K562 (cell line): ENCODE measurements at regions of chr1 and their contacts with region 1.

Region 1: GRCh38 chr1:228131766-228132165 is 8.3 kb upstream of the GUK1 start:
- DNase-seq: no peak
- ATAC-seq: no peak
- H3K4me3 ChIP-seq: no peak overlapping the region
- H3K27ac ChIP-seq: no peak overlapping the region
- H3K4me1 ChIP-seq: peaks cover 3 to 6% of the 10 kb centered on the region in 2 experiments; a peak in 3 of 5 replicates
- H3K27me3 ChIP-seq: no peaks in the 10 kb centered on the region
- CTCF ChIP-seq: no peak
- EP300 ChIP-seq: no peak
- POLR2A ChIP-seq: no peak
- RAD21 ChIP-seq: no peak

Region 2: GRCh38 chr1:227886993-227887696 is 244.6 kb before region 1 on chr1:
- CTCF ChIA-PET with region 1: no interaction called
- POLR2A ChIA-PET with region 1: no interaction called
- in situ Hi-C with region 1: no loop called
- intact Hi-C with region 1: no loop called
- DNase-seq: peak in 1 of 4 experiments; percentile 17
- ATAC-seq: no peak
- H3K4me3 ChIP-seq: no peak overlapping the region
- H3K27ac ChIP-seq: no peak overlapping the region
- H3K4me1 ChIP-seq: peaks cover 20 to 76% of the 10 kb centered on the region in 2 experiments
- H3K27me3 ChIP-seq: peaks cover 0 to 8% of the 10 kb centered on the region in 2 experiments; a peak in 2 of 5 replicates
- CTCF ChIP-seq: no peak
- EP300 ChIP-seq: no peak
- POLR2A ChIP-seq: no peak
- RAD21 ChIP-seq: no peak

Region 3: GRCh38 chr1:228165372-228166169 is 33.8 kb after region 1 on chr1 and contains the start of gene IBA57:
- CTCF ChIA-PET with region 1: no interaction called
- POLR2A ChIA-PET with region 1: interaction called, 8 read pairs
- in situ Hi-C with region 1: no loop called
- intact Hi-C with region 1: loop called (anchors 1 kb)
- DNase-seq: peak; percentile 98 to 100 (median 98)
- ATAC-seq: peak; percentile 92
- H3K4me3 ChIP-seq: peak within 1 kb of the TSS; percentile 78
- H3K27ac ChIP-seq: peak within 1 kb of the TSS; percentile 99
- H3K4me1 ChIP-seq: peaks cover 18 to 48% of the 10 kb centered on the region in 2 experiments
- H3K27me3 ChIP-seq: no peaks in the 10 kb centered on the region
- CTCF ChIP-seq: peak; percentile 84 to 96 (median 93)
- EP300 ChIP-seq: peak; percentile 39; the same call in 1 of the 2 replicates
- POLR2A ChIP-seq: peak; percentile 75; the same call in 1 of the 2 replicates
- RAD21 ChIP-seq: peak; percentile 23 to 30; a peak in 2 of 4 replicates
- polyA plus RNA-seq, gene IBA57: 0.77 to 1.0 TPM

Region 4: DNA sequence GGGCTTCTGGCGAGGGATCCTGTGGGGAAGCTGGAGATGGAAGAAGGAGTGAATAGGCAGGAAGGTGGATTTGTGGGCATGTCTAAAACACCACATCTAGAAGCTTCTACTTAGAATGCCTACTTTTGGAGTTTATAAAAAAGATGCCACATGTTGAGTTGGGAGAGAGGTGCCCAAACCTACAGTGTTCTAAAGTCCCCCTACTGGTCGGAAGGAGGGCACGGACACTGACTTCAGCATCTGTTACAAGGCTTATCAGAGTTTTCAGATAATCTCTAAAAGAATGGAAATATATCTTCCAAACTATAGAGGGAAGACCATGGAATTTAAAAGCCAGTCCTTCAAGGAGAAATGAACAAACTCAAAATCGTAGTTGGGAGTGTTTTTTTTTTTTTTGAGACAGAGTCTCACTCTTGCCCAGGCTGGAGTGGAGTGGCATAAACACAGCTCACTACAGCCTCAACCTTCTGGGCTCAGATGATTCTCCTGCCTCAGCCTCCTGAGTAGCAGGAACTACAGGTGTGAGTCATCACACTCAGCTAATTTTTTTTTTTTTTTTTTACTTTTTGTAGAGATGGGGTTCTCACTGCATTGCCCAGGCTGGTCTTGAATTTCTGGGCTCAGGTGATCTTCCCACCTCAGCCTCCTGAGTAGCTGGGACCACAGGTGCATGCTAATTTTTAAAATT is 48.6 kb after region 1 on chr1:
- CTCF ChIA-PET with region 1: no interaction called
- POLR2A ChIA-PET with region 1: no interaction called
- in situ Hi-C with region 1: no loop called
- intact Hi-C with region 1: loop called (anchors 5 kb)
- DNase-seq: no peak
- ATAC-seq: no peak
- H3K4me3 ChIP-seq: no peak overlapping the region
- H3K27ac ChIP-seq: no peak overlapping the region
- H3K4me1 ChIP-seq: peaks cover 22 to 31% of the 10 kb centered on the region in 2 experiments; a peak in 4 of 5 replicates
- H3K27me3 ChIP-seq: no peaks in the 10 kb centered on the region
- CTCF ChIP-seq: peak; percentile 25 to 51 (median 36); a peak in 5 of 6 replicates
- EP300 ChIP-seq: no peak
- POLR2A ChIP-seq: no peak
- RAD21 ChIP-seq: no peak

Region 5: GRCh38 chr1:228190192-228190591 is 58.4 kb after region 1 on chr1:
- CTCF ChIA-PET with region 1: interaction called, 13 read pairs
- POLR2A ChIA-PET with region 1: no interaction called
- in situ Hi-C with region 1: no loop called
- intact Hi-C with region 1: no loop called
- DNase-seq: no peak
- ATAC-seq: no peak
- H3K4me3 ChIP-seq: no peak overlapping the region
- H3K27ac ChIP-seq: no peak overlapping the region
- H3K4me1 ChIP-seq: peaks cover 4 to 6% of the 10 kb centered on the region in 2 experiments; a peak in 4 of 5 replicates
- H3K27me3 ChIP-seq: no peaks in the 10 kb centered on the region; a peak in 1 of 5 replicates
- CTCF ChIP-seq: no peak
- EP300 ChIP-seq: no peak
- POLR2A ChIP-seq: no peak
- RAD21 ChIP-seq: no peak

Region 6: DNA sequence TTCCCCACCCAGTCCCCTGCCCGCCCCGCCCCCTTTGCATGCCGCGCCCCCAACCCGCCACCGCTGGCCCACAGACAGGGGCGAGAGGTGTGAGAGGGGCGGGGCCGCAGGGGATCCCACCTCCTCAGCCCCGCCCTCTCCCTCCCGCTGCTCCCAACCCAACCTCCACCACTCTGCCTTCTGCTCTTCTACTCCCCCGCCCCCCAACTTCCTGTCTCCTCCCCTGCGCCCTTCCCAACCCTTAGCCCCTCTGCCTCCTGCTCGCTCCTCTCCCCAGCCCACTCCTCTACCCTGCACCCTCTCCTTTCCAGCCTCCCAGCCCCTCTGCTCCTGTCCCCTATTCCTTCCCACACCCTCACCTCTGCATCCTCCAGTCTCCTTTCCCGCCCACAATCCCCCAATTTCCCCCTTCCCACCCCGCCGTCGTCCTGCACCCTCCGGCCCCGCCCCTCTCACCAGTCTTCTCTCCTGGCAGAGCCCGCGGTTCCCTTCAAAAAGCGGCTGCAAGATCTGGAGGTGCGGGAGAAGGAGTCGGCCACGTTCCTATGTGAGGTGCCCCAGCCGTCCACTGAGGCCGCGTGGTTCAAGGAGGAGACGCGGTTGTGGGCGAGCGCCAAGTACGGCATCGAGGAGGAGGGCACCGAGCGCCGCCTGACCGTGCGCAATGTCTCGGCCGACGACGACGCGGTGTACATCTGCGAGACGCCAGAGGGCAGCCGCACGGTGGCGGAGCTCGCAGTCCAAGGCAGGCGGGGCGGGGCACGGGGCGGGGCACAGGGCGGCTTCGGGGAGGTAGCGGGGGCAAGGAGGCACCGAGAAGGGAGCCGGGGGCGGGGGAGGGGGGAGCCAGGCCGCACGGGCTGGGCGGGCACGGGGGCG is 81.4 kb after region 1 on chr1:
- CTCF ChIA-PET with region 1: no interaction called
- POLR2A ChIA-PET with region 1: no interaction called
- in situ Hi-C with region 1: no loop called
- intact Hi-C with region 1: loop called (anchors 1 kb)
- DNase-seq: peak; percentile 92 to 98 (median 95)
- ATAC-seq: peak; percentile 98
- H3K4me3 ChIP-seq: peak overlapping the region; percentile 55
- H3K27ac ChIP-seq: peak overlapping the region; percentile 79; the same call in 2 of the 3 replicates
- H3K4me1 ChIP-seq: peaks cover 0 to 58% of the 10 kb centered on the region in 2 experiments; a peak in 3 of 5 replicates
- H3K27me3 ChIP-seq: peaks cover 0 to 3% of the 10 kb centered on the region in 2 experiments; a peak in 2 of 5 replicates
- CTCF ChIP-seq: peak; percentile 63 to 95 (median 85); a peak in 5 of 6 replicates
- EP300 ChIP-seq: no peak
- POLR2A ChIP-seq: peak; percentile 34; the same call in 1 of the 2 replicates
- RAD21 ChIP-seq: peak; percentile 63 to 66

Region 7: GRCh38 chr1:228265167-228265566 is 133.4 kb after region 1 on chr1:
- CTCF ChIA-PET with region 1: no interaction called
- POLR2A ChIA-PET with region 1: no interaction called
- in situ Hi-C with region 1: no loop called
- intact Hi-C with region 1: loop called (anchors 5 kb)
- DNase-seq: peak; percentile 53 to 67 (median 60)
- ATAC-seq: peak; percentile 84
- H3K4me3 ChIP-seq: no peak overlapping the region
- H3K27ac ChIP-seq: no peak overlapping the region
- H3K4me1 ChIP-seq: peaks cover 4 to 21% of the 10 kb centered on the region in 2 experiments; a peak in 4 of 5 replicates
- H3K27me3 ChIP-seq: no peaks in the 10 kb centered on the region
- CTCF ChIP-seq: peak; percentile 63 to 66 (median 65)
- EP300 ChIP-seq: no peak
- POLR2A ChIP-seq: no peak
- RAD21 ChIP-seq: peak; percentile 58 to 76